ENCODE measurements at regions of chr11 and their contacts with region 1.

Region 1: GRCh38 chr11:17230867-17231851 is 23.4 kb upstream of the PIK3C2A start:
- DNase-seq: peak in 8 of 9 donors; percentile 20 to 62 (median 36)
- ATAC-seq: peak; percentile 79
- H3K4me3 ChIP-seq: no peak overlapping the region
- H3K4me3 Mint-ChIP-seq: peak overlapping the region in 6 of 10 donors; percentile 2 to 55 (median 26)
- H3K27ac ChIP-seq: no peak overlapping the region
- H3K27ac Mint-ChIP-seq: peak overlapping the region in 4 of 9 donors; percentile 14 to 90 (median 60)
- H3K4me1 ChIP-seq: peaks cover 3 to 7% of the 10 kb centered on the region in 2 donors
- H3K4me1 Mint-ChIP-seq: peaks cover 7 to 19% (median 14%) of the 10 kb centered on the region in 7 donors
- H3K27me3 ChIP-seq: no peaks in the 10 kb centered on the region
- H3K27me3 Mint-ChIP-seq: peaks cover 0 to 27% (median 0%) of the 10 kb centered on the region in 5 donors

Region 2: DNA sequence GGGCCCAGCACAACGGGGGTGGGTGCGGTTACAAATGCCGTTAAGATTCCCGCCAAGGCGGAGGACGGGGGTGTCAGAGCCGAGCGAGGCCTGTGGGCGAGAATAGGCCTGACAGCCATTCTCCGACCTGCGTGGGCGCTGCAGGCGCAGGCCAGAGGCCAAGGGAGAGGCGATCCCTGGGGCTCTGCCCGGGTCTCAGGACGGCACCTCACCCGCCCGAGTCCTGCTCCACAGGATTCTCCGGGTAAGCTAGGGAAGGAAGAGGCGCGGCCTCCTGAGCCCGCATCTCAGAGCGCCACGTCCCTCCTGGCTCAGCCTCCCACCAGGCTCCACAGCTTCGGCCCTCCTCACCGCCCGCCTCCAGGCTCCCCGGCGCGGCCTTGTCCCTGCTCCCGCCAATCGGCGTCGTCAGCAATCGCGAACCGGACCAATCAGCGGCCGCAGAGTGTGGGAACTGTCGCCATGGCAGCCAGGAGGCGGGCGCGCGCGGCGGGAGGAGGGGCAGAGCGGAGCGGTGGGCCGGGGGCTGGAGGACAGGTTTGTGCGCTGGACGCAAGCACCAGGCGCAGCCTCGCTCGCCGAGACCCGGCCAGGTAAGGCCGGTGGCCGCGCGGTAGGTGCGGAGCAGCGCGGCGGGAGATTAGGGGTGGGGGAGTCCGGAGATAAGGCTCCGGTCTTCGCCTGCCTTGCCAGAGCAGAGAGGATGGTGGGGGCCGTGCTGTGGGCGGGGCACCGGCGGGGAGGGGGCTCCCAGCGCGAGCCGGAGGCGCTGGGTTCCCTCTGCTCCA is 45.3 kb after region 1 on chr11 and contains the start of gene NUCB2:
- CTCF ChIA-PET with region 1: interaction called, 5 read pairs
- POLR2A ChIA-PET with region 1: interaction called, 7 read pairs
- intact Hi-C with region 1: loop called (anchors 1 kb)
- DNase-seq: peak; percentile 92 to 98 (median 95)
- ATAC-seq: peak; percentile 96
- H3K4me3 ChIP-seq: peak within 1 kb of the TSS; percentile 78
- H3K4me3 Mint-ChIP-seq: peak within 1 kb of the TSS; percentile 83 to 99 (median 93)
- H3K27ac ChIP-seq: peak within 1 kb of the TSS; percentile 90
- H3K27ac Mint-ChIP-seq: peak within 1 kb of the TSS; percentile 88 to 93 (median 91)
- H3K4me1 ChIP-seq: peaks cover 17 to 28% of the 10 kb centered on the region in 2 donors
- H3K4me1 Mint-ChIP-seq: peaks cover 19 to 48% (median 38%) of the 10 kb centered on the region in 7 donors
- H3K27me3 ChIP-seq: no peaks in the 10 kb centered on the region
- H3K27me3 Mint-ChIP-seq: no peaks in the 10 kb centered on the region
- total RNA-seq, gene NUCB2: 72.0 to 171 (median 145) TPM

Region 3: DNA sequence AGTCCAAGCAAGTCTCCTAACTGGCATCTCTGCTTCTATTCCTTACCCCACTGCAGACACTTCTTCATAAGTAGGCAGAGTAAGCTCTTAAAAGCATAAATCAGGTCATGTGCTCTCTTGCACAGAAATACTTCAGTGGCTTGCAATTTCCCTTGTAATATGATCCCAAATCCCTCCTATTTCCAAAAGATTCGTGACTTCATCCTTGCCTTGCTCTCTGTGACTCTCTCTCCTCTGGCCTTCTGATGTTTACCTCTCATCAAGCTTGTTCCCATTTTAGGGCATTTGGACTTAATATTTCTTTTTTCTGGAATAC is 83.0 kb after region 1 on chr11:
- CTCF ChIA-PET with region 1: interaction called, 3 read pairs
- POLR2A ChIA-PET with region 1: no interaction called
- intact Hi-C with region 1: loop called in 1 of 2 experiments (anchors 5 kb)
- DNase-seq: no peak
- ATAC-seq: no peak
- H3K4me3 ChIP-seq: no peak overlapping the region
- H3K4me3 Mint-ChIP-seq: no peak overlapping the region
- H3K27ac ChIP-seq: no peak overlapping the region
- H3K27ac Mint-ChIP-seq: no peak overlapping the region
- H3K4me1 ChIP-seq: no peaks in the 10 kb centered on the region
- H3K4me1 Mint-ChIP-seq: no peaks in the 10 kb centered on the region
- H3K27me3 ChIP-seq: no peaks in the 10 kb centered on the region
- H3K27me3 Mint-ChIP-seq: no peaks in the 10 kb centered on the region

Region 4: GRCh38 chr11:17384002-17384511 is 152.9 kb after region 1 on chr11:
- CTCF ChIA-PET with region 1: interaction called, 20 read pairs
- POLR2A ChIA-PET with region 1: no interaction called
- intact Hi-C with region 1: loop called (anchors 1 kb)
- DNase-seq: peak; percentile 53 to 79 (median 69)
- ATAC-seq: peak; percentile 67
- H3K4me3 ChIP-seq: no peak overlapping the region
- H3K4me3 Mint-ChIP-seq: no peak overlapping the region
- H3K27ac ChIP-seq: no peak overlapping the region
- H3K27ac Mint-ChIP-seq: no peak overlapping the region
- H3K4me1 ChIP-seq: no peaks in the 10 kb centered on the region
- H3K4me1 Mint-ChIP-seq: peaks cover 0 to 7% (median 0%) of the 10 kb centered on the region in 7 donors
- H3K27me3 ChIP-seq: no peaks in the 10 kb centered on the region
- H3K27me3 Mint-ChIP-seq: peaks cover 0 to 5% (median 0%) of the 10 kb centered on the region in 5 donors

Region 5: DNA sequence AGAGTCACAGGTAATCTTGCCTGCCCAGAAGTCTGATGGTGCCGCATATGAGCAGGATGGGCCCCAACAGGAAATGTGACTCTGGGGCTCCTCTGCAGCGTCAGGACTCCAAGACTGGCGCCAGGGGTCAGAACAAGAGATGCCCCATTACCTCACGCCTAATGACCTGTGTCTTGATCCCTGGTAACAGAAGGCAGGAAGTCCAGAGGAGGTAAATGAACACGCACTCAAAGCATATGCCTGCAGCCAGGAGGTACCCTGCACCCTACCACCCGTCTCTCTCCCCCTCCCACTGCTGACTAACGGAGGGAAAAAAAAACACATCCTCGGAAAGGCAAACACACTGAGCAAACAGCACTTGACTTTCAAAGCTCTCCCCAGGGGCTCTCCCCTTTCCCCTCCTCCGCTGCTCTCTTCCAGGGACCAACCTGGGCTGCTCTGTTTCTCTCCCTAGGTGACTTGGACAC is 208.2 kb after region 1 on chr11:
- CTCF ChIA-PET with region 1: no interaction called
- POLR2A ChIA-PET with region 1: no interaction called
- intact Hi-C with region 1: no loop called
- DNase-seq: peak in 1 of 9 donors; percentile 9
- ATAC-seq: no peak
- H3K4me3 ChIP-seq: no peak overlapping the region
- H3K4me3 Mint-ChIP-seq: peak overlapping the region in 8 of 10 donors; percentile 14 to 68 (median 44)
- H3K27ac ChIP-seq: no peak overlapping the region
- H3K27ac Mint-ChIP-seq: peak overlapping the region in 1 of 9 donors; percentile 37
- H3K4me1 ChIP-seq: no peaks in the 10 kb centered on the region
- H3K4me1 Mint-ChIP-seq: peaks cover 6 to 19% (median 10%) of the 10 kb centered on the region in 7 donors
- H3K27me3 ChIP-seq: no peaks in the 10 kb centered on the region
- H3K27me3 Mint-ChIP-seq: peaks cover 0 to 21% (median 15%) of the 10 kb centered on the region in 5 donors

Region 6: GRCh38 chr11:17528181-17528691 is 297.1 kb after region 1 on chr11:
- CTCF ChIA-PET with region 1: interaction called, 4 read pairs
- POLR2A ChIA-PET with region 1: no interaction called
- intact Hi-C with region 1: loop called (anchors 1 kb)
- DNase-seq: peak in 6 of 9 donors; percentile 14 to 49 (median 28)
- ATAC-seq: peak; percentile 52
- H3K4me3 ChIP-seq: no peak overlapping the region
- H3K4me3 Mint-ChIP-seq: no peak overlapping the region
- H3K27ac ChIP-seq: no peak overlapping the region
- H3K27ac Mint-ChIP-seq: no peak overlapping the region
- H3K4me1 ChIP-seq: no peaks in the 10 kb centered on the region
- H3K4me1 Mint-ChIP-seq: no peaks in the 10 kb centered on the region
- H3K27me3 ChIP-seq: no peaks in the 10 kb centered on the region
- H3K27me3 Mint-ChIP-seq: peaks cover 0 to 7% (median 4%) of the 10 kb centered on the region in 5 donors

Region 7: GRCh38 chr11:17827006-17827405 is 595.8 kb after region 1 on chr11:
- CTCF ChIA-PET with region 1: no interaction called
- POLR2A ChIA-PET with region 1: no interaction called
- intact Hi-C with region 1: no loop called
- DNase-seq: no peak
- ATAC-seq: no peak
- H3K4me3 ChIP-seq: no peak overlapping the region
- H3K4me3 Mint-ChIP-seq: no peak overlapping the region
- H3K27ac ChIP-seq: no peak overlapping the region
- H3K27ac Mint-ChIP-seq: no peak overlapping the region
- H3K4me1 ChIP-seq: no peaks in the 10 kb centered on the region
- H3K4me1 Mint-ChIP-seq: peaks cover 0 to 6% (median 0%) of the 10 kb centered on the region in 7 donors
- H3K27me3 ChIP-seq: no peaks in the 10 kb centered on the region
- H3K27me3 Mint-ChIP-seq: no peaks in the 10 kb centered on the region